Psoas muscle (tissue), 8 donors: ENCODE measurements at regions of chr5 and their contacts with region 1.

Region 1: DNA sequence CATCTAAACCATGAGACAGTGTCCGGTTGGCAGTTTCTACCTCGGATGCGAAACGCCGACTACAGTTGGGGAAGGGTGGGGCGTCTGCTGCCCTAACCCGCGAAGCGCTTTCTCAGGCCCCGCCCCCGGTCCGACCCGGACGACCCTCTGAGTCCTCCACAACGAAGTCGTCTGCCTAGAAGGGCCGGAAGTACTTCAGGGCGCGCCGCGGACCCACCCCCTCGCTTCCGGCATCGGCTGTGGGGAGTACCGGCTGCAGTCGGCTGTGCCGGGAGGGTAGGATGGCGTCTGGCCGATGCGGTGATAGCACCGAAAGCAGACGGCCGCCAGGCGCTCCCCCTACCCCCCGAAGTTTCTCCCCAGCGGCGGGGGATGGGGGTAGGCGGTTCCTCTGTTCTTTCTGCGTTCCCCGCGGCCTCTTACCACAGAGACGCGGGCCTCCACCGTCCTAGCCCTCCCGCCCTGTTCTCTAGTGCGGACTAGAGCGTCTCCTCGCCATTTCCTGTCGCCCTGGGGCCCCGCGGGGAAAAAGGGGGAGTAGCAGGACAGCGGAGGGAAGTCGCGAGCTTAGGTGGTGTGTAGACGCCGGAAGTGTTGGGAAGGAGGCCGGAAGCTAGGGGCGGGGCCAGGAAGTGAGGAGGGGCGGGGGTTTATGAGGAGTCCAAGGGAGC is at the start of gene TRIM41:
- DNase-seq: peak; percentile 99 to 100
- ATAC-seq: peak; percentile 83 to 86 (median 85)
- H3K4me3 ChIP-seq: peak within 1 kb of the TSS; percentile 97
- H3K27ac ChIP-seq: peak within 1 kb of the TSS; percentile 100
- H3K4me1 ChIP-seq: peaks cover 14% of the 10 kb centered on the region
- H3K27me3 ChIP-seq: no peaks in the 10 kb centered on the region
- CTCF ChIP-seq: no peak
- total RNA-seq, gene TRIM41: 26.6 to 33.6 (median 31.5) TPM

Region 2: DNA sequence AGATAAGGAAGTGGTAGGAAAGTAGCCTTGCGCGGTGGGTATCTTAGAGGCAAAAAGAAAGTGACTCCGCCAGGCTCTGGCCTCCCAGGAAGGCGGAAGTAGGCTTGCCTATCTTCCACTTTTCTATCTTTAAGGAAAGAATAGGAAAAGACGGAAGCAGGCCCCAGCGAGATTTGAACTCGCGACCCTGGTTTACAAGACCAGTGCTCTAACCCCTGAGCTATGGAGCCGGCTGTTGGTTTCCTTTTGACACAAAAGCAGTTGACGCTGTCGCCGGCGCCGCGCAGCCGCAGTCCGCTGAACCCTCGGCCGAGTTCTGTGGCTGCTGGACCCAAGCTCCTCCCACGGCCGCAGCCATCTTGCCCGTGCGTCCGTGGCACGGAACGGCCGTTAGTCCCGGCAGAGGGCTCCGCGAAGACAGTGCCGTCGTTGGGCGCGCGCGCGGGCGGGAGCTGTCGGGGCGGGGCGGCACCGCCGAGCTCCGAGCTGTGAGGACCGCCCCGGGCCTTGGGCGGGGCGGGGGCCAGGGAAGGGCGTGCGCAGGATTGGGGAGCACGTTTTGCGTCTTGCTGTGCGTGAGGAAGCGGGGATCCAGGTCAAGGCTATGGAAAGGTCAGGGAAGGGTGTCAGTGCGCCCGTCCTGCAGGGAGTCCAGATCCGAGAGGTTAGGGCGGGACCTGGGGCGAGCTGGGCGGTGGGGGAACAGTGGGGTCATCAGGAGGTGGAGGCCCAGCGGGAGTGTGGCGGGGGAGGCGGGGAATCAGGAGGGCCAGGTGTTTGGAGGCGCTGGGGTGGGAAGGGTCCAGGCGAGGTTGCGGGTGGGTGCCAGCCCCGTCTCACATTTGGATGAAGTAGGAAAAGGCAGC is 31.4 kb before region 1 on chr5:
- intact Hi-C with region 1: loop called (anchors 1 kb)
- DNase-seq: peak; percentile 94 to 97
- ATAC-seq: peak; percentile 74 to 81 (median 76)
- H3K4me3 ChIP-seq: peak overlapping the region; percentile 92
- H3K27ac ChIP-seq: peak overlapping the region; percentile 92
- H3K4me1 ChIP-seq: peaks cover 5% of the 10 kb centered on the region
- H3K27me3 ChIP-seq: no peaks in the 10 kb centered on the region
- CTCF ChIP-seq: no peak

Region 3: GRCh38 chr5:181207214-181208107 is 15.7 kb before region 1 on chr5:
- intact Hi-C with region 1: loop called (anchors 1 to 2 kb)
- DNase-seq: peak; percentile 74 to 80
- ATAC-seq: peak; percentile 16 to 53 (median 20)
- H3K4me3 ChIP-seq: peak overlapping the region; percentile 76
- H3K27ac ChIP-seq: peak overlapping the region; percentile 93
- H3K4me1 ChIP-seq: peaks cover 34% of the 10 kb centered on the region
- H3K27me3 ChIP-seq: no peaks in the 10 kb centered on the region
- CTCF ChIP-seq: no peak

Region 4: GRCh38 chr5:181243512-181244343 is 20.5 kb after region 1 on chr5 and contains the start of gene RACK1:
- intact Hi-C with region 1: loop called in 1 of 2 experiments (anchors 1 kb)
- DNase-seq: peak; percentile 90 to 93
- ATAC-seq: peak; percentile 69 to 72 (median 72)
- H3K4me3 ChIP-seq: peak within 1 kb of the TSS; percentile 95
- H3K27ac ChIP-seq: peak within 1 kb of the TSS; percentile 98
- H3K4me1 ChIP-seq: peaks cover 45% of the 10 kb centered on the region
- H3K27me3 ChIP-seq: no peaks in the 10 kb centered on the region
- CTCF ChIP-seq: no peak
- total RNA-seq, gene RACK1: 832 to 1,110 (median 978) TPM

Region 5: GRCh38 chr5:181260387-181261319 is 37.5 kb after region 1 on chr5 and contains the start of gene TRIM52:
- intact Hi-C with region 1: loop called in 1 of 2 experiments (anchors 1 kb)
- DNase-seq: peak; percentile 94 to 97
- ATAC-seq: peak; percentile 90 to 95 (median 92)
- H3K4me3 ChIP-seq: peak within 1 kb of the TSS; percentile 100
- H3K27ac ChIP-seq: peak within 1 kb of the TSS; percentile 99
- H3K4me1 ChIP-seq: peaks cover 55% of the 10 kb centered on the region
- H3K27me3 ChIP-seq: no peaks in the 10 kb centered on the region
- CTCF ChIP-seq: no peak
- total RNA-seq, gene TRIM52: 3.0 to 5.8 (median 5.3) TPM